HEK293T (cell line): ENCODE measurements at regions of chr5 and their contacts with region 1.

Region 1: DNA sequence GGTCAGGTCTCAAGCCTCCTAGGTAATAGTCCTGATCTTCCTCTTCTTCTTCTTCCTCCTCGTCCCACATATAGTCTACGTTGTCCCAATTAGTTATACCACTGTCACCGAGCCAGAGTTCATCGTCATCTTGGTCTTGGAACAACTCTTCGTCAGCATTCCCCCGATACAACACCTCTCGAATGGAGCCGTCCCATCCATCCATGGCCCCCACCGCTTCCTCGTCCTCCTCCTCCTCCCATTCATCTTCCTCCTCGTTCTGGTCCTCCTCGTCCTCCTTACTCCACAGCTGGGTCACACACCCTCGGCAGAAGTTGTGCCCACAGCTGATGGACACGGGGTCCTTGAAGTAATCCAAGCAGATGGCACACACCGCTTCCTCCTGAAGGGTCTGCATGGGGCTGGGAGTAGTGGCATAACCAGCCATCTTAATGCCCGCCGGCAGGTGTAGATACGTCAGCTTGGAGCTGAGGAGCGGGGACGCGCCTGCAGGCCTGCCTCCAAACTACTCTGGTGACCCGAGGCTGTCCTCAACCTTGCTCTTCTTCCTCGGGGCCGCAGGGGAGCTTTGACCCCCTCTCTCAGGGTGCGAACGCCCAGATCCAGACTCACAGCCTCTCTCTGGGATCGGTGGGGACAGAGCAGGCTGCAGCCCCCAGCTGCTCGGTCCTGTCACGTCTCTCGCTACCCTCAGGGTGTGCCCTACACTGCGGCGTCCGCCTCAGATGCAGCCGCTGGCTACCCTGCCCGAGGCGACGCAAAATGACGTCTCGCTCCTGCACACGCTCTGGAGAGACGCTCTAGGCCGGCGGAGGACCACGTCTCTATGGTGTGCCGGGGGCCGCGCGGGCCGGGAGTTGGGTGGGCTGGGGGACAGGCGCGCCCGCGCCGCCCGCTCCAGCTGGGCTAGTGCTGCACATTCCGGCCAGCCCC is at the start of gene TRIM52:
- DNase-seq: peak; percentile 89

Region 2: DNA sequence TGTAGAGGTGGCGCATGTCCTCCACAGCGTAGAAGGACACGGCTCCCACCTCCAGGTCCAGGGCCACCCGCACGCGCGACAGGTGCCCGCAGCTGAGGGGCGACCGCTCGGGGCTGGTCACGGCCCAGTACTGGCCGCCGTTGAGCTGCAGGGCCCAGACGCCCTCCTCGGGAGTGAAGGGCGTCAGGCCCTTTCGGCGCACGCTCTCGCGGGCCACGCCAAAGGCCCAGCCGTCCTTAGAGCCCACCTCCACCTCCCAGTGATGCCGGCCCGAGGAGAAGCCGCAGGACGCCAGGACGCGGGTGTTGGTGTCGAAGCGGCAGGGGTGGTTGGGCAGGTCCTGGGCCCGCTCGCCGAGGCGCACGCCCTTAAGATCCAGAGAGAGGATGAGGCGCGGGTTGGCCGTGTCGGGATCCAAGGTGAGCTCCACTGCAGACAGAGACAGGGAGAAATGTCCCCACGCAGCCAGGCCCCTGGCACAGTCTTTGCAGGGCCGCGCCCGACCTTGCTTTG is 65.3 kb before region 1 on chr5:
- CTCF ChIA-PET with region 1: no interaction called
- POLR2A ChIA-PET with region 1: no interaction called
- DNase-seq: no peak

Region 3: GRCh38 chr5:181234455-181235306 is 26.0 kb before region 1 on chr5:
- CTCF ChIA-PET with region 1: interaction called, 3 read pairs
- POLR2A ChIA-PET with region 1: interaction called, 11 read pairs
- DNase-seq: no peak

Region 4: GRCh38 chr5:181243512-181244343 is 16.9 kb before region 1 on chr5 and contains the start of gene RACK1:
- CTCF ChIA-PET with region 1: no interaction called
- POLR2A ChIA-PET with region 1: interaction called, 73 read pairs
- DNase-seq: peak; percentile 87